Heart right ventricle (tissue), 16 donors: ENCODE measurements at regions of chr4 and their contacts with region 1.

Region 1: GRCh38 chr4:20305976-20306375 is 54.3 kb downstream of the SLIT2 start:
- DNase-seq: no peak
- ATAC-seq: no peak
- H3K4me3 ChIP-seq: no peak overlapping the region
- H3K27ac ChIP-seq: no peak overlapping the region
- H3K4me1 ChIP-seq: no peaks in the 10 kb centered on the region
- H3K27me3 ChIP-seq: no peaks in the 10 kb centered on the region
- CTCF ChIP-seq: peak in 1 of 9 donors; percentile 9

Region 2: DNA sequence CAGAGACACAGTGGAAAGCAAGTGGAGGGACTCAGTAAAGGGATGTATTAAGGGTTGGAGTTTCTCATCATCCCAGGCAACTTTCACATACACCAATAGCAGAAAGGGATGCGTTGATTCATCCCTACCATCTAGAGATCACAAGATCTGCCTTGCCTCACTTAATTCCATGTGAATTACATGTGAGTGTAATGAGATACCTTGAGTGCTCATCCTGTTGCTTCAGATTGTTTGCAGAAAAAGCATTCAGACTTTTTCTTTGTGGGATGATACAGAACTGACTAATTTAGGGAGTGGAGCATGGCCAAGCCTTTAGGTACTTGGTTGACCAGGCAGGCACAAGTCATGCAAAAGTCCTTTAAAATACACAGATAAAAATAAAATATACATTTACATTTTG is 179.1 kb before region 1 on chr4:
- intact Hi-C with region 1: no loop called
- DNase-seq: no peak
- ATAC-seq: no peak
- H3K4me3 ChIP-seq: no peak overlapping the region
- H3K27ac ChIP-seq: no peak overlapping the region
- H3K4me1 ChIP-seq: no peaks in the 10 kb centered on the region
- H3K27me3 ChIP-seq: no peaks in the 10 kb centered on the region
- CTCF ChIP-seq: no peak

Region 3: DNA sequence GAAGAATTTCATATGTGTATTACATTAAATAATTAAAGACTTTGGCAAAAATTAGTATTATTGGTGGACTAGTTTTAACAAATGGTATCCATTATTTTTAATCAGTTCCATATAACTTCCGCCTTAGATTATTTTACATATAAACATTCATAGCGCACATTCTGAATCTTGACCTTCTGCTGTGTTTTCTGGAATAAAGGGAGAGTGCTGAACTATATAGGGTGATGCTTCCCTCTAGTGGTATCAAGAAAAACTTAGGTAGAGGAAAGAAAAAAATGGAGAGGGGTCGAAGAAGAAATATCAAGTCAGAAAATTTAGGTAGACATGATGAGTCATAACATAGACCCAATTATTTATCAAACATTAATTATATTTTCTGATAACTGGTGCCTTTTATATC is 238.7 kb after region 1 on chr4:
- intact Hi-C with region 1: loop called in 1 of 10 experiments (anchors 10 kb)
- DNase-seq: no peak
- ATAC-seq: peak in 1 of 8 donors; percentile 62
- H3K4me3 ChIP-seq: no peak overlapping the region
- H3K27ac ChIP-seq: no peak overlapping the region
- H3K4me1 ChIP-seq: no peaks in the 10 kb centered on the region
- H3K27me3 ChIP-seq: no peaks in the 10 kb centered on the region
- CTCF ChIP-seq: peak in 7 of 9 donors; percentile 39 to 63 (median 50)

Region 4: DNA sequence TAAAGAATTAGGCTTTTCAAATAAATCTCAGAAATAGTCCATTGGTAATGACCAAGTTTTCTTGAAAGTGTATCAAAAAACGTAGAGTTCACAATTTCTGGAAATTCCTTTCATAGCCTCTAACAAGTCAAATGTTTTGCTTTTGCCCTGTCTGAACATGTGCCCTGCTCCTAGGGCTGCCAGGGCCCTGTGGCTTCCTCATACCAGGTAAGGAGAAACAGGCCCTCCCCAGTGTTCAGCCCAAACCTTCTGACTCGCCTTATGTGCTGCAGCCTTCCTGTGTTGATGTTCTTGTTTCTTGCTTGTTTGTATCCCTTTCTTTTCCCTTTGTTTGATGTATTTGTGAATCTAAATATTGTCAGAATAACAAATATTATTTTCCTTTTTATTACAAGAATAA is 248.2 kb after region 1 on chr4:
- intact Hi-C with region 1: loop called in 2 of 10 experiments (anchors 10 kb)
- DNase-seq: no peak
- ATAC-seq: no peak
- H3K4me3 ChIP-seq: no peak overlapping the region
- H3K27ac ChIP-seq: no peak overlapping the region
- H3K4me1 ChIP-seq: no peaks in the 10 kb centered on the region
- H3K27me3 ChIP-seq: no peaks in the 10 kb centered on the region
- CTCF ChIP-seq: no peak